Aorta (tissue), 5 donors: ENCODE measurements at regions of chr17 and their contacts with region 1.

Region 1: DNA sequence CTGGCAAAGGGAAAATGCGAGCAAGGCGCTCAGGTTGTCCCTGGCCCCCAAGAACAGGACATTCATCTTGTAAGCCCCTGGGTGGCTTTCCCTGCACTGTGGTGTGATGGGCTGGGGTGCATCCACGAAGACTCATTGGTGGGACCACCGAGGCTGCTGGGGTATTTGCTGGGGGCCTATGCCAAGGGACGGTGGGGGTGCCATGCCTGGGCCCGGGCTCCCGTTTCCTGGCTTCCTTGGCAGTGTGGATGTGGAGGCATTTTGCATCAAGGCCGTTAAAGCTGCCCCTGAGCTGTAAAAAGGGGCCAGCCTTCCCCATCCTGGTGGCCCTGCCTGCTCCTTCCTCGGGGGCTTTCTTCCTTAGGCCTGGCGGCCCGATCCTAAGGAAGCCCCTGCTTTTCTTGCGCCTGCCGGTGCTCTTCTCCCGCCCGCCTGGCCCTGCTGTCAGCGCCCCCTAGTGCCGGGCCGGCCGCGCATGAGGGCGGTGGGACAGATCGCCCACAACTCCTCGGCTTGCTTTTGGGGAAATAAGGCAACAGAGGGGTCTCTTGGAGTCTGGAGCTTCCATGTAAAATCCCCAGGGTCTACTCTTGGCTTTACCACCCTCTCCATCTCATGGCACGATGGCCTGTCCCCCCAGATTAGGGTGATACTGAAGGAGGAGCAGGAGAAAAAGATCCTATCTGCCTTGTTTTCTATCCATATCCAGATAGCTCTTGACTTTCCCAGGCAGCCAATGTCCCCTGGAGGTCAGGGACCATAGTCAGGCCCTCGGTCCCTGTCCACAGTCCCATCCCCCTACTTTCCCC is 9.8 kb upstream of the TBX2 start:
- DNase-seq: peak; percentile 66 to 88
- ATAC-seq: peak; percentile 63
- H3K4me3 ChIP-seq: no peak overlapping the region
- H3K27ac ChIP-seq: no peak overlapping the region
- H3K4me1 ChIP-seq: no peaks in the 10 kb centered on the region
- H3K27me3 ChIP-seq: no peaks in the 10 kb centered on the region

Region 2: DNA sequence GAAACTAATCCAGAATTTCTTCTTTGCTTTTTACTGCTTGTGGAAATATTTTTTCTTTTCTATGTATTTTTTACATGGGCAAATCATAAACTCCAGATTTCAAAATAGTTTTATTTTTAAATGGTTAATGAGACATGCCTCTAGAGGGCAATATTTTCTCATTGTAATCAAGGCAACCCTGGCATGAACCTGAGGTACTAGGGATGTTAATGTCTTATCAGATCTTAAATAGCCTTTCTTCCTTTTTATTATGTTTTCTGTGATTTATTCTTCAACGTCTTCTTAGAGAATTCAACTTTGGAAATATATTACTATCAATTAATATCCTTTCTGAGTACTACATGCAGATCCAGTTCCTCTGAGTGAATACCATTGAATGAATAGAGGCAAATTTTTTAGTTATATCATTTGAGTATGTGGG is 387.5 kb before region 1 on chr17:
- intact Hi-C with region 1: loop called (anchors 5 kb)
- DNase-seq: no peak
- ATAC-seq: no peak
- H3K4me3 ChIP-seq: no peak overlapping the region
- H3K27ac ChIP-seq: no peak overlapping the region
- H3K4me1 ChIP-seq: no peaks in the 10 kb centered on the region
- H3K27me3 ChIP-seq: no peaks in the 10 kb centered on the region

Region 3: GRCh38 chr17:61208301-61209105 is 181.4 kb before region 1 on chr17:
- intact Hi-C with region 1: loop called (anchors 5 to 10 kb)
- DNase-seq: no peak
- ATAC-seq: peak; percentile 65
- H3K4me3 ChIP-seq: peak overlapping the region in 1 of 2 donors; percentile 59
- H3K27ac ChIP-seq: no peak overlapping the region
- H3K4me1 ChIP-seq: peaks cover 3 to 6% of the 10 kb centered on the region in 2 donors
- H3K27me3 ChIP-seq: no peaks in the 10 kb centered on the region